Activated T-helper 1 cell treated with anti-CD3 and anti-CD28 coated beads, Interleukin-12 subunit alpha, Interleukin-12 subunit beta, Interleukin-2, Interleukin-4 antibody, amounts not matched to agents 30 ng/mL and 10 ng/mL and 1 ng/mL, durations not matched to agents 14 hours and 24 hours and 36 hours (primary cell): ENCODE measurements at regions of chr15 and their contacts with region 1.

Region 1: DNA sequence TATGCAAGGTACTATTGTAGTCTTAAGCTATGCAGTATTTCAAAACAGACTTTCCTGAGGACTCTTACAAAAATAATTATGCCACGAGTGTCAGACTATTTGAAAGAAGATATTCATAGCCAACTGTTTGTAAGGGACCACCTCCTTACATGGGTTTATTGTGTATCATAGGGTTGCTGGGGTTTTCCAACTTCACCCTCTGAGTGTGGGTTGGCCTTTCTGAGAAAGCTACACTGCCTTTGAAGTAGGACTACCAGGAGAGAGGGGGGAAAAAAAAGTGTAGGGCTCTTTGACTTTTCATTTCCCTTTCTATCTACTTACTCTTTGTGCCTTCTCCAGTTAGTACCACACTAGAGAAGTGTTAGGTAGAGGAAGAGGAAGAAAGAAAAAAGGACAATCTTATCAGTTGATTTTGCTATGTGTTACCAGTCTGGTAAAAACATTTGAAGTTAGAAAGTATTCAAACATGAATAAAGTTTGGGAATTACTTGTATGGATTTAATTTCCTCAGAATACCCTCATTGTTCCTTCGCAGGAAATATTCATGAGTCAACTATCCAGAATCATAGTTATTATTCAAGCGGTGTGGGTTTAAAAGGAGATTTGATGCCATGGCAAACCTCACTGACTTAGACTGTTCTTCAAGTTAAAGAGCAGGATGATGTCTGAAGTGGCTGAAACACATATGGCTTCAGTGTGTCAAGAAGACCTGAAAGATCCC is 329.3 kb upstream of the THBS1 start:
- DNase-seq: no peak
- H3K4me3 Mint-ChIP-seq: no peak overlapping the region
- H3K27ac Mint-ChIP-seq: peak overlapping the region; percentile 51
- H3K4me1 Mint-ChIP-seq: peaks cover 25% of the 10 kb centered on the region
- H3K27me3 Mint-ChIP-seq: peaks cover 4% of the 10 kb centered on the region

Region 2: DNA sequence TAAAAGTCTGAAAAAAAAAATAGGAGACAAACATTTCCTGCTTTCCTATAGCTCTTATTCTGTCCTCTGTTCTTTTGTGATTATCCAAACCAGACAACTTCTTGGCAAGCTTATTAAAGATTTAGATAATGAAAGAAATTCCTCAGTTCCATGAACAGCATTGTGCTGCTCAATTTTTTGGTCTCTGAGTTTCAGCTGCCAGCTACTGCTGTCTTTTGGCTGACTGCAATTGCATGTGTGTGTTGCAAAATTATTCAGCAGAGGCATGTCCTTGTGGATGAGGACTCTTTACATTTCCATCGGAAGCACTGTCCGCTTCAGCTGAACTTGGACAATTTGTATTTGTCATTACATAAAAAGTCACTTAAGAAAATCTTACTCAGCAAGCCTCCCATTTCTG is 289.6 kb before region 1 on chr15:
- intact Hi-C with region 1: no loop called
- DNase-seq: no peak
- H3K4me3 Mint-ChIP-seq: no peak overlapping the region
- H3K27ac Mint-ChIP-seq: no peak overlapping the region
- H3K4me1 Mint-ChIP-seq: no peaks in the 10 kb centered on the region
- H3K27me3 Mint-ChIP-seq: peaks cover 6% of the 10 kb centered on the region

Region 3: DNA sequence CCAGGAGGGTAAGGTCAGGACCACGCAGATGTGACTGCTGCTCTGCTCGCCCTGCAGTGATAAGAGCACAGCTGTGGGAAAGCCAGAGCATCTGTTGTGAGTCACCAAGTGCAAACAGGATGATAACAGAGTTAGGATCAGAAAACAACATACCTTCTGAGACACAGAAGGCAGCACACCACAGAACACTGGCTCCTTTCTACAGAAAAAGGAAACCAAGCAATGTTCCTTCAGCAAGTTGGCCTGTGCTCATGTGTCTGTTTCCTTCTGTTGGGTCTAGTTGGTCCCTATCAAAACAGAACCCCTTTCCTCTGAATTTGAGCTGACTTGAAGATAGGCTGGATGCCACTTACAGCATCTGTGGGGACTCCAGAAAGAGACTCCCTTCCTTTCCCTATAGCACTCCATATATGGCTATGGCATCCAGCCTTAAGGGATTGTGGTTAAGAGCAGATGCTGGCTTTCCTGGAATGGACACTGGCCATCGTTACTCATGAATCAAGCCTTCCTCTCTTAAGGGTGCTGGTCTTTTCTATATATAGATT is 111.4 kb before region 1 on chr15:
- intact Hi-C with region 1: loop called (anchors 1 kb)
- DNase-seq: peak; percentile 14
- H3K4me3 Mint-ChIP-seq: no peak overlapping the region
- H3K27ac Mint-ChIP-seq: peak overlapping the region; percentile 37
- H3K4me1 Mint-ChIP-seq: peaks cover 54% of the 10 kb centered on the region
- H3K27me3 Mint-ChIP-seq: no peaks in the 10 kb centered on the region